ENCODE measurements at regions of chr6 and their contacts with region 1.

Region 1: GRCh38 chr6:153511896-153512496 is 380.9 kb upstream of the RGS17 start:
- DNase-seq: no peak
- ATAC-seq: peak in 1 of 2 donors; percentile 40
- H3K4me3 ChIP-seq: no peak overlapping the region
- H3K27ac ChIP-seq: no peak overlapping the region
- H3K4me1 ChIP-seq: no peaks in the 10 kb centered on the region
- H3K27me3 ChIP-seq: no peaks in the 10 kb centered on the region

Region 2: DNA sequence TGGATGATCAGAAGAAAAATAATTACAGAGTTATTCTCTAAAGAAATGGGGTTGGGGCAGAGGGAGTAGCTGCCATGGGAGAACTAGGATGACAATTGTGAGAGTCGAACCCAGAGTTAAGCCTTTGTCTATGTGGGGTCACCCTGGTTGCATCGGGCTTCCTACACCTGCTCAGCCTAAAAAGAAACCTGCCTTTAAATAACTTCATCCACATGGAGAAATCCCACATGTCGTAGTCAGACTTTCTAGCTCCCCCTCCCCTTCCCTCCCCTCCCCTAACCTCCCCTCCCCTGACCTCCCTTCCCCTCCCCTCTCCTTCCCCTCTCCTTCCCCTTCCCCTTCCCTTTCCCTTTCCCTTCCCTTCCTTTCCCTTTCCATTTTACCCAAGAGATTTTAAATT is 746.7 kb before region 1 on chr6:
- intact Hi-C with region 1: no loop called
- DNase-seq: no peak
- ATAC-seq: no peak
- H3K4me3 ChIP-seq: no peak overlapping the region
- H3K27ac ChIP-seq: no peak overlapping the region
- H3K4me1 ChIP-seq: no peaks in the 10 kb centered on the region
- H3K27me3 ChIP-seq: no peaks in the 10 kb centered on the region

Region 3: GRCh38 chr6:152982768-152983636 is 529.0 kb before region 1 on chr6 and contains the start of gene FBXO5:
- intact Hi-C with region 1: no loop called
- DNase-seq: peak; percentile 99
- ATAC-seq: peak; percentile 97 to 99
- H3K4me3 ChIP-seq: peak within 1 kb of the TSS; percentile 76
- H3K27ac ChIP-seq: peak within 1 kb of the TSS; percentile 95
- H3K4me1 ChIP-seq: peaks cover 5% of the 10 kb centered on the region
- H3K27me3 ChIP-seq: no peaks in the 10 kb centered on the region
- total RNA-seq, gene FBXO5: 1.9 to 3.5 (median 3.0) TPM

Region 4: DNA sequence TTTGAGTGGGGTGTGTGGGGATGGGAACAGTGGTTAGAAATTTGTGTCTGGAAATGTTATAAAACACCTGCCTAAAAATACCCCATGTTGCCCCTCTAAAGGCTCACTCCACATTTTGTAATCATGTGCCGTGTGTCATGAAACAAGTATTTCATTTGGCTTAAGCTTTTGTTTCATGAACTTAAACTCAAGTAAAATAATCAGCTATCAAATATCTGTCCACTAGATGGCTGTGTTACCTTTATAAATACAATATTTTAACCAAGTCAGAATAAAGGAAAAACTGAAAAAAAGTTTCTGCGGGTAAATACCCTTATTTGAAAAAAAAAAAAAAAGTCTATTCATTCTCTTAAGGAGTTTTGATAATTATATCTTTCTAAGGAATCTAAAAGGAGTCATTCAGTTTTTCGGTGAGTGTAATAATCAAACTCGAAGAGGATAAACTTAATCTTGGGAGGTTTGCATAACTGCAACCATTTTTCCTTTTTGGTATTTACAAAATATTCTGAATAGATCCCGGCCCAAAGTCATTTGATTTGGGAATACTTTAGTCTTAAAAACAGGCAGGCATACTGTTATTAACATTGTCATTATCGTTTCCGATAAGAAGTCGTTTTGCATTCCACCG is 479.6 kb before region 1 on chr6:
- intact Hi-C with region 1: loop called in 2 of 4 experiments (anchors 10 kb)
- DNase-seq: no peak
- ATAC-seq: no peak
- H3K4me3 ChIP-seq: no peak overlapping the region
- H3K27ac ChIP-seq: no peak overlapping the region
- H3K4me1 ChIP-seq: no peaks in the 10 kb centered on the region
- H3K27me3 ChIP-seq: no peaks in the 10 kb centered on the region

Measured in right cardiac atrium (tissue), 5 donors.